Tibial artery (tissue), 4 donors: ENCODE measurements at regions of chr5 and their contacts with region 1.

Region 1: DNA sequence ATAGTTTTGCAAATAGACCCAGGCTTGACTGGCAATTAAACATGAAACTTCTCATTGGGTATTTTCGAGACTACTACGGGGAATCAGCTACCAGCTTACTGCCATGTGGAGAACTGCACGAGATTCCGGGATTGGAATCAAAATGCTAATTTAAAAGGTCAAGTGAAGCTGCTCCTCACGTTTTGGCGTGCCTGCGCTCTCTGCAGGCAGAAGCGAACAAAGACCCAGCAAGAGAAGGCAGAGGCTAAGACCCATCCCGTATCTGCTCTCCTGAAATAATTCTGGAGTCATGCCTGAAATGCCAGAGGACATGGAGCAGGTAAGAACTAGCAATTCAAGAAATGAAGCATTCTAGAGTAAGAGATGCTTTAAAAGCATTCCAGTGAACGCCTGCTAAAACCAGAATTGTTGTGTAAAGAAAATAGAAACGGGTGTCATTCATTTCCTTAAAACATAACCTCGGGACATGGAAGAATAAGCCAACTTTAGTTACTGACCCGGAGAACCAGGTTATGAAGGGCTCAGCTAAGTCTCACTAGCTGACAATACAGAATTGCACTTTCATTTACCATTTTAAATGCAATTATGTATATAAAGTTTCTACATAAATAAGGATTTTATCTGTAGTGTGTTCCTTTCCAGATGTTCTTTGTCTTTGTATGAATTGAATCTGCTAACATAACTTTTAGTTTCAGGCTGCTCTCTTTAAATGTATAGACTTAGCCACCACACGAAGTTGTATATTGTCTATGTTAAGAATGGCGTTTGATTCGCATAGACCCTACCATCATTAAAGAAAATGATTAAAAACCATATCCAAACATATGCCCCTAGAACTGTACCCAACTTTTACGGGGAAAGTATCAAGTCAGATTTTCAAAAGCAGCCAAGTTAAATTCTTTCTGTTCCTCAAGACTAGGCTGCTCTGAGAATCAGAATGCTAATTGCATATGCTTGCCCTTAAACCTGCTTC is 2.0 kb upstream of the MAT2B start:
- DNase-seq: peak; percentile 67 to 77
- H3K4me3 ChIP-seq: peak overlapping the region; percentile 67 to 76
- H3K27ac ChIP-seq: peak overlapping the region; percentile 95 to 97
- H3K4me1 ChIP-seq: peaks cover 0 to 44% (median 22%) of the 10 kb centered on the region in 4 donors
- H3K27me3 ChIP-seq: no peaks in the 10 kb centered on the region
- CTCF ChIP-seq: peak in 1 of 2 experiments; percentile 28

Region 2: GRCh38 chr5:163459922-163460766 is 43.2 kb before region 1 on chr5 and contains the starts of genes HMMR and NUDCD2:
- intact Hi-C with region 1: loop called (anchors 5 kb)
- DNase-seq: peak; percentile 96 to 97
- H3K4me3 ChIP-seq: peak within 1 kb of the TSS; percentile 68 to 84
- H3K27ac ChIP-seq: peak within 1 kb of the TSS; percentile 96 to 97
- H3K4me1 ChIP-seq: peaks cover 0 to 31% (median 16%) of the 10 kb centered on the region in 4 donors
- H3K27me3 ChIP-seq: no peaks in the 10 kb centered on the region
- CTCF ChIP-seq: peak in 1 of 2 experiments; percentile 8

Region 3: DNA sequence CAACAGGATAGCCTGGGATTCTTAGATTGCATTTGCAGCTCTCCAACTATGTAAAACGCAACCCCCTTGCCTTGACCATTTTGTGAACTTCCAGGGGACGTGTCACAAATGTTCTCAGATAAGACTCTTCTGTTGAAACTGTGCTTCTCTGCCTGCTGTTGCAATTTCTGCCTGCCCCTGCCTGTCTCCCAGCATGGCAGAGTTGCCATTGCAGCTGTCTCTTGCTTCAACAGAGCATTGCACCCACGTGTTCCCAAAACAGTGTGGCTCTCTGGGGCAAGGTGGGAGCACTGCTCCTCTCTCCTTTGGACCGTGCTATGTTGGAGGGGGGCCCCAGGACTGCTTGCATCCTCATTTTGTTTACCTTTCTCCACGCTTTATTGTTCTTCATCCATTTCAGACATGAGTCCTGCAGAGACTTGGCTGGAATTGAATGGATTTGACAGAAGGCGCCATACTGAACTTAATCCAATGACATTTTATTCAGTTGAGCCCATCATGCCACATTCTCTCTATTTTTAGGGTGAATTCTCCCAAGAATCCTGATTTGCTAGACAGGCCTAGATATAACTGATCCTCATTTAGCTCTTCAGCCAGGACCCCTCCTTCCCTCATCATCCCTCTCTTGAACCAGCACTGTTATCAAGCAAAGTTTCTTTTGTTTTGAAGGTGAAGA is 92.7 kb after region 1 on chr5:
- intact Hi-C with region 1: no loop called
- DNase-seq: no peak
- H3K4me3 ChIP-seq: no peak overlapping the region
- H3K27ac ChIP-seq: no peak overlapping the region
- H3K4me1 ChIP-seq: no peaks in the 10 kb centered on the region
- H3K27me3 ChIP-seq: peaks cover 0 to 2% of the 10 kb centered on the region in 2 donors
- CTCF ChIP-seq: no peak